Naive thymus-derived CD4-positive, alpha-beta T cell (primary cell): ENCODE measurements at regions of chr11 and their contacts with region 1.

Region 1: DNA sequence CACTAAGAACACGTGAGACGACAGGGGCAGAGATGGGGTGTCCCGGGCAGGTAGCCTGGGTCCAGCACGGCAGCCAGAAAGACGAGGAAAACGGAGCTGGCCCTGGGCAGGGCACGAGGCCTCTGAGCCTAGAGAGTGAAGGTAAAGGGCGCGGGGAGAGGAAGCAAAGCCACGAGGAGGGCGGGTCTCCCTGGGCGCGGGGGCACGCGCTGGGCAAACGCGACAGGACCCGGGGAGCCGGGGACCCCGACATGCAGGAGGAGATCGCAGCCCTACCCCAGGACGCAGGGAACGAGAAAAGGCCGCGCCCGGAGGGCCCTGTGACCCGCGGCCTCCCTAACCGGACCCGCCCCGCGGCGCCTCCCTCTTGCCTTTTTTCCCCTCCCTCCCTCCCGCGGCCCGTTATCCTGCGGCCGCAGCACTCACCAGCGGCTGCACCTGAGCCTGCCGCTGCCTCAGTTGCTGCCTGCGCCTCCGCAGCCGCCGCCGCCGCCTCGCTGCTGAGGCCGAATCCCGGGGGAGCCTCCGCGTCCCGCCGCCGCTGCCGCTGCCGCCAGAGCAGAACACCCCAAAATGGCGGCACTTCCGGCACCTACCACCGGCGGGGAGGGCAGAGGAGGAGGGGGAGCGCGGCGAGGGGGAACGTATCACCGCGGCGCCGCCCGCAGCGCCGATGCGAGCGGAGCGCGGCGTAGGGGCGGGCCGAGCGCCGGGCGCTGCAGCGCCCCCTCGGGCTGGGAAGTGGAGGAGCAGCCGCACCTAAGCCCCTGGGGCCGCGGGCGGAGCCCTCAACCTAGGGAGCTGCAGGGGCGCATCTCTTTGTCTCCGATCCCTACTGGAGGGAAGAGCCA is at the start of gene CELF1:
- DNase-seq: peak; percentile 88 to 95 (median 92)
- ATAC-seq: peak; percentile 99
- H3K4me3 ChIP-seq: peak within 1 kb of the TSS; percentile 87
- H3K4me3 Mint-ChIP-seq: peak within 1 kb of the TSS; percentile 93 to 100 (median 96)
- H3K27ac ChIP-seq: peak within 1 kb of the TSS; percentile 89
- H3K27ac Mint-ChIP-seq: peak within 1 kb of the TSS; percentile 86 to 97 (median 95)
- H3K4me1 ChIP-seq: peaks cover 27 to 34% of the 10 kb centered on the region in 2 donors
- H3K4me1 Mint-ChIP-seq: peaks cover 36 to 57% (median 42%) of the 10 kb centered on the region in 7 donors
- H3K27me3 ChIP-seq: no peaks in the 10 kb centered on the region
- H3K27me3 Mint-ChIP-seq: no peaks in the 10 kb centered on the region
- total RNA-seq, gene CELF1: 107 to 148 (median 129) TPM

Region 2: DNA sequence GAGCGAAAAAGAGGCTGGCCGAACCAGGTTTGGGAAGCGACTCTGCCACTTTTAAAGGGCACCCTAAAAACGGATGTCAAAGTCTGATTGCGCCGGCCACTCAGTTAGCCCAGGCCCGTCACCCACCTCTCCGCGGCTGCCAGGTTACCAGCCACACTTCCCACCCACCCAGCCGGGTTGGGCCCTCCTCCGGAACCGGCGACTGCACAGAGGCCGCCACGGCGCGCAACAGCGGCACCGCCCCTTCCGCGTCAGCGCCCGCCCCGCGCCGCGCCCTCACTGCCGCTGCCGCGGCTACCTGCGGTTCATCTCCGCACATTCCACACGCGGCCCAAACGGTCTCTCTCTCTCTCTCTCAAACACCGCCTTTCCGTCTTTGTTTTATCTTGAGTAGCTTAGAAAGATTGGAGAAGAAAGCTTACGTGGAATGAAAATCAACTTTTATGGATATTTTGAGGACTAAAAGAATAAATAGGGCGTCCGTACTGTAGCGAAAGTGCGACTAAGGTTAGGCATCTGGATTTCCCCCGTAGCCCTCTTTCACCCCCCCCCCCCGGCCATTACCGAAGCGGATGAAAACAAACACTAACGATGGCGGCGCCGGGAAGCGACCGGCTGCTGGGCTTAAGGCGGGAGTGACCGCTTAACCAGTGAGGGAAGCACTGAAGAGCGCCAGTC is 935.7 kb before region 1 on chr11 and contains the starts of genes ATG13 and HARBI1:
- CTCF ChIA-PET with region 1: no interaction called
- POLR2A ChIA-PET with region 1: no interaction called
- intact Hi-C with region 1: loop called in 1 of 2 experiments (anchors 10 kb)
- DNase-seq: peak; percentile 89 to 95 (median 94)
- ATAC-seq: peak; percentile 96
- H3K4me3 ChIP-seq: peak within 1 kb of the TSS; percentile 99
- H3K4me3 Mint-ChIP-seq: peak within 1 kb of the TSS; percentile 93 to 99 (median 96)
- H3K27ac ChIP-seq: peak within 1 kb of the TSS; percentile 100
- H3K27ac Mint-ChIP-seq: peak within 1 kb of the TSS; percentile 95 to 100 (median 99)
- H3K4me1 ChIP-seq: peaks cover 17 to 27% of the 10 kb centered on the region in 2 donors
- H3K4me1 Mint-ChIP-seq: peaks cover 26 to 53% (median 42%) of the 10 kb centered on the region in 7 donors
- H3K27me3 ChIP-seq: no peaks in the 10 kb centered on the region
- H3K27me3 Mint-ChIP-seq: no peaks in the 10 kb centered on the region
- total RNA-seq, gene ATG13: 70.0 to 114 (median 96.8) TPM
- total RNA-seq, gene HARBI1: 5.8 to 18.1 (median 8.0) TPM

Region 3: DNA sequence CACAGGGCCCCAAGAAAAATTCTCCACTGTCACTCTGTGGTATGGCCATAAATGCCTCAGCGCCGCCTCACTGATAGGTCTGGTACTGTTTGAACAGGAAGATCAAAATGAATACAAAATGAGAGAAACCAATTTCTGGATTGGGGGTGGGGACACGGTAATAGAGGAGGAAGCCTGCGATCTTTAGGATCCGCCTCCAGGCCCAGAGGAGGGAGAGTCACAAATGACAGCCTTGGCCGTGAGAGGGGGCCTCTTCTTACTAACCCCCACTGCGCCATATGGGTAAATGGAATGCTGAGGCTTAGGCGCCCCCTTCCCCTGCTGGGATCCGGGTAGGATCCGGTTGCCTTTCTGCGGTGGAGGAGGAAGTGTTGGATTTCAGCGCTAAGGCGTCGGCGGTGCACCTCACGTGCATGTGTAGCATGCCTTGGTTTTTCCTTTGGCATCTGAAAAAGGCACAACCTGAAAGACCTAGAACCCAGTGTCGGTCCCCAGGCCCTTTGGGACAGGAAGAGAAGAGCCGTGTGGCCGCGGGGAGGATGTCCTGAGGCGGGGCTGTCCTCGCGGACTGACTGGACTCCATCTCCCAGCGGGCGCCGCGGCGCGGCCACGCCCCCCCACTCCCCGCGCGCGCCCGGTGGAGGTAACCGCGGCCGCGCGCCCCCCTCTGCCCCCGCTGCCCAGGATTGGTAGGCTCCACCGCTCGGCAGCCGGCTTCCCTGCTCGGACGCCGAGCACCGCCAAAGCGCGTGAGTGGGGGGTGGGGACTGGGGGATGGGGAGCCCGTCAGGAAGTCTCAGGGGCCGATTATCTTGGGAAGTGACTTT is 283.6 kb before region 1 on chr11:
- CTCF ChIA-PET with region 1: no interaction called
- POLR2A ChIA-PET with region 1: no interaction called
- intact Hi-C with region 1: loop called (anchors 1 to 2 kb)
- DNase-seq: peak; percentile 82 to 89 (median 87)
- ATAC-seq: peak; percentile 82
- H3K4me3 ChIP-seq: peak overlapping the region; percentile 65
- H3K4me3 Mint-ChIP-seq: peak overlapping the region; percentile 78 to 97 (median 87)
- H3K27ac ChIP-seq: peak overlapping the region; percentile 95
- H3K27ac Mint-ChIP-seq: peak overlapping the region; percentile 93 to 99 (median 96)
- H3K4me1 ChIP-seq: peaks cover 27 to 43% of the 10 kb centered on the region in 2 donors
- H3K4me1 Mint-ChIP-seq: peaks cover 38 to 62% (median 59%) of the 10 kb centered on the region in 7 donors
- H3K27me3 ChIP-seq: no peaks in the 10 kb centered on the region
- H3K27me3 Mint-ChIP-seq: no peaks in the 10 kb centered on the region

Region 4: GRCh38 chr11:47509077-47509536 is 43.7 kb before region 1 on chr11:
- CTCF ChIA-PET with region 1: no interaction called
- POLR2A ChIA-PET with region 1: interaction called, 3 read pairs
- intact Hi-C with region 1: loop called (anchors 5 kb)
- DNase-seq: peak in 4 of 9 donors; percentile 3 to 28 (median 22)
- ATAC-seq: peak; percentile 46
- H3K4me3 ChIP-seq: no peak overlapping the region
- H3K4me3 Mint-ChIP-seq: peak overlapping the region in 9 of 10 donors; percentile 18 to 67 (median 58)
- H3K27ac ChIP-seq: peak overlapping the region; percentile 33
- H3K27ac Mint-ChIP-seq: peak overlapping the region; percentile 63 to 87 (median 82)
- H3K4me1 ChIP-seq: peaks cover 14 to 37% of the 10 kb centered on the region in 2 donors
- H3K4me1 Mint-ChIP-seq: peaks cover 50 to 88% (median 76%) of the 10 kb centered on the region in 7 donors
- H3K27me3 ChIP-seq: no peaks in the 10 kb centered on the region
- H3K27me3 Mint-ChIP-seq: no peaks in the 10 kb centered on the region

Region 5: GRCh38 chr11:47565340-47566148 is 12.8 kb after region 1 on chr11 and contains the start of gene PTPMT1:
- CTCF ChIA-PET with region 1: interaction called, 5 read pairs
- POLR2A ChIA-PET with region 1: interaction called, 38 read pairs
- intact Hi-C with region 1: loop called (anchors 1 kb)
- DNase-seq: peak; percentile 42 to 75 (median 57)
- ATAC-seq: peak; percentile 92
- H3K4me3 ChIP-seq: peak within 1 kb of the TSS; percentile 88
- H3K4me3 Mint-ChIP-seq: peak within 1 kb of the TSS; percentile 81 to 89 (median 86)
- H3K27ac ChIP-seq: peak within 1 kb of the TSS; percentile 89
- H3K27ac Mint-ChIP-seq: peak within 1 kb of the TSS; percentile 78 to 95 (median 84)
- H3K4me1 ChIP-seq: peaks cover 3 to 8% of the 10 kb centered on the region in 2 donors
- H3K4me1 Mint-ChIP-seq: peaks cover 0 to 32% (median 24%) of the 10 kb centered on the region in 7 donors
- H3K27me3 ChIP-seq: no peaks in the 10 kb centered on the region
- H3K27me3 Mint-ChIP-seq: no peaks in the 10 kb centered on the region
- total RNA-seq, gene PTPMT1: 20.5 to 32.9 (median 22.7) TPM

Region 6: DNA sequence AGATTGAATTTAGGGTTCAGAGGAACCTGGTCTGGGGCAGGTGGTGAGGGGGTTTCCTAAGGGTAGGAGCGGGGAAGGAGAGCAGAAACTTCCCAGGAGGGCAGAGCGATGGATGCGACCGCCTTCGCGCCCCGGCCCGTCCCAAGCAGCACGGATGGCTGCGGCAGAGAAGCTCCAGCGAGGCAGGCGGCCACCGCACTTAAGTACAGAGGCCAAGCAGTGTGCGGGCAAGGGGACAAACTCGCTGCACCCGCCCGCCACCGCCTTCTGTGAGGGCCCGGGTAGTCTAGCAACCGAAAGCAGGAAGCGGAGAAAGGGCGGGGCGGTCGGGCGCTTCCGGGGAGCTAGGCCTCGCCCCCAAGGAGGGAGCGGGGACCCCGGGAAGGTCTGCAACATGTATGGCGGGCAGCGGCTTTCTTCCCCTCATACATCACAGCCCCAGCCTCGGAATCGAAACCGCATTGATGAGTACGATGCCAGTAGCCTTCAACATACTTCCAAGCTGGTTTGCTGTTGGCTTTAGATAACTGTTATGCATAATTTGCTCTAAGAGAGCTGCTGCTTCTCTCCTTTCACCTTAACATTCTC is 162.4 kb after region 1 on chr11 and contains the start of gene AGBL2:
- CTCF ChIA-PET with region 1: interaction called, 3 read pairs
- POLR2A ChIA-PET with region 1: no interaction called
- intact Hi-C with region 1: loop called in 1 of 2 experiments (anchors 5 kb)
- DNase-seq: peak; percentile 61 to 85 (median 82)
- ATAC-seq: peak; percentile 99
- H3K4me3 ChIP-seq: peak within 1 kb of the TSS; percentile 94
- H3K4me3 Mint-ChIP-seq: peak within 1 kb of the TSS; percentile 95 to 99 (median 97)
- H3K27ac ChIP-seq: peak within 1 kb of the TSS; percentile 84
- H3K27ac Mint-ChIP-seq: peak within 1 kb of the TSS; percentile 96 to 99 (median 98)
- H3K4me1 ChIP-seq: peaks cover 7 to 15% of the 10 kb centered on the region in 2 donors
- H3K4me1 Mint-ChIP-seq: peaks cover 0 to 22% (median 15%) of the 10 kb centered on the region in 7 donors
- H3K27me3 ChIP-seq: no peaks in the 10 kb centered on the region
- H3K27me3 Mint-ChIP-seq: no peaks in the 10 kb centered on the region
- total RNA-seq, gene AGBL2: 4.7 to 11.3 (median 8.1) TPM